ENCODE measurements at regions of chr6 and their contacts with region 1.

Region 1: DNA sequence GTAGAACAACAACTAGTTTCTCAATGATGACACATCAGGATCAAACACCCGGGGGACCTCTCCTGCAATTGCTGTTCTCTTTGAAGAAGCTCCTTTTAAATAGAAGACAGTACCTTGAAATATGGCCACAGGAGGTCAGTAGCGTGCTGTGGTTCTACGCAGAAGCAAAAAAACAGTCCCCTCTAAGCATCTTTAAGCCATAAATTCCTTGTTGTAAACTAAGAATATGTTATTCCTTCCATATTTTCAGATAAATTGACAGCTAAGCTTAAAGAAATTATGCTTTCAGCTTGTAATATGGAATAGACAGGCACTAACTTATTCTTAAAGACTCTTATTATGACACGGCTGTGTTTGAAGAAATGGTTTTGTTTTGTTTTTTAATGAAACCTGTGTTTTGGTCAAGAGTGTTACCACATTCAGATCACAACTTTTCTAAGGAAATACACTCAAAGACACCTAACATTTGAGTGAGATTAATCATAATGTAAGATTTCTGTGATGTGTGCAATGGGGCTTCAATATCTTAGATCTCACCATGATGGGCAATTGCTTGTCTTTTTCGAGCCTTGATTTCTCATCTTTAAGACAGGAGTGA is 49.7 kb upstream of the IL20RA start:
- DNase-seq: peak; percentile 71
- H3K4me3 Mint-ChIP-seq: no peak overlapping the region
- H3K27ac Mint-ChIP-seq: no peak overlapping the region
- H3K4me1 Mint-ChIP-seq: peaks cover 17% of the 10 kb centered on the region
- H3K27me3 Mint-ChIP-seq: peaks cover 4% of the 10 kb centered on the region

Region 2: GRCh38 chr6:137076277-137077068 is 18.0 kb before region 1 on chr6:
- CTCF ChIA-PET with region 1: interaction called, 20 read pairs
- DNase-seq: peak; percentile 70
- H3K4me3 Mint-ChIP-seq: no peak overlapping the region
- H3K27ac Mint-ChIP-seq: no peak overlapping the region
- H3K4me1 Mint-ChIP-seq: no peaks in the 10 kb centered on the region
- H3K27me3 Mint-ChIP-seq: peaks cover 43% of the 10 kb centered on the region

Region 3: GRCh38 chr6:137165375-137166246 is 71.1 kb after region 1 on chr6:
- CTCF ChIA-PET with region 1: interaction called, 23 read pairs
- DNase-seq: peak; percentile 76
- H3K4me3 Mint-ChIP-seq: no peak overlapping the region
- H3K27ac Mint-ChIP-seq: no peak overlapping the region
- H3K4me1 Mint-ChIP-seq: peaks cover 30% of the 10 kb centered on the region
- H3K27me3 Mint-ChIP-seq: peaks cover 24% of the 10 kb centered on the region

Region 4: GRCh38 chr6:137271245-137272183 is 177.0 kb after region 1 on chr6:
- CTCF ChIA-PET with region 1: interaction called, 13 read pairs
- DNase-seq: no peak
- H3K4me3 Mint-ChIP-seq: no peak overlapping the region
- H3K27ac Mint-ChIP-seq: no peak overlapping the region
- H3K4me1 Mint-ChIP-seq: no peaks in the 10 kb centered on the region
- H3K27me3 Mint-ChIP-seq: peaks cover 17% of the 10 kb centered on the region